ENCODE measurements at regions of chrX and their contacts with region 1.

Region 1: GRCh38 chrX:12901486-12901885 is 4.9 kb upstream of the TLR8 start:
- DNase-seq: peak; percentile 77

Region 2: GRCh38 chrX:12814420-12814819 is 87.1 kb before region 1 on chrX:
- in situ Hi-C with region 1: loop called (anchors 25 kb)
- DNase-seq: peak; percentile 72

Region 3: GRCh38 chrX:13101441-13102139 is 200.1 kb after region 1 on chrX:
- in situ Hi-C with region 1: no loop called
- DNase-seq: peak; percentile 84